Activated T-helper 2 cell treated with anti-CD3 and anti-CD28 coated beads, Interferon-gamma antibody, Interleukin-2, Interleukin-4, amounts not matched to agents 10 μg/mL and 5 μg/mL and 100 μg/mL, durations not matched to agents 14 hours and 24 hours and 36 hours (primary cell): ENCODE measurements at regions of chr2 and their contacts with region 1.

Region 1: GRCh38 chr2:112749755-112750559 is 14.5 kb downstream of the CKAP2L start:
- DNase-seq: peak; percentile 74
- H3K4me3 Mint-ChIP-seq: peak overlapping the region; percentile 13
- H3K27ac Mint-ChIP-seq: peak overlapping the region; percentile 75
- H3K4me1 Mint-ChIP-seq: peaks cover 35% of the 10 kb centered on the region
- H3K27me3 Mint-ChIP-seq: no peaks in the 10 kb centered on the region

Region 2: DNA sequence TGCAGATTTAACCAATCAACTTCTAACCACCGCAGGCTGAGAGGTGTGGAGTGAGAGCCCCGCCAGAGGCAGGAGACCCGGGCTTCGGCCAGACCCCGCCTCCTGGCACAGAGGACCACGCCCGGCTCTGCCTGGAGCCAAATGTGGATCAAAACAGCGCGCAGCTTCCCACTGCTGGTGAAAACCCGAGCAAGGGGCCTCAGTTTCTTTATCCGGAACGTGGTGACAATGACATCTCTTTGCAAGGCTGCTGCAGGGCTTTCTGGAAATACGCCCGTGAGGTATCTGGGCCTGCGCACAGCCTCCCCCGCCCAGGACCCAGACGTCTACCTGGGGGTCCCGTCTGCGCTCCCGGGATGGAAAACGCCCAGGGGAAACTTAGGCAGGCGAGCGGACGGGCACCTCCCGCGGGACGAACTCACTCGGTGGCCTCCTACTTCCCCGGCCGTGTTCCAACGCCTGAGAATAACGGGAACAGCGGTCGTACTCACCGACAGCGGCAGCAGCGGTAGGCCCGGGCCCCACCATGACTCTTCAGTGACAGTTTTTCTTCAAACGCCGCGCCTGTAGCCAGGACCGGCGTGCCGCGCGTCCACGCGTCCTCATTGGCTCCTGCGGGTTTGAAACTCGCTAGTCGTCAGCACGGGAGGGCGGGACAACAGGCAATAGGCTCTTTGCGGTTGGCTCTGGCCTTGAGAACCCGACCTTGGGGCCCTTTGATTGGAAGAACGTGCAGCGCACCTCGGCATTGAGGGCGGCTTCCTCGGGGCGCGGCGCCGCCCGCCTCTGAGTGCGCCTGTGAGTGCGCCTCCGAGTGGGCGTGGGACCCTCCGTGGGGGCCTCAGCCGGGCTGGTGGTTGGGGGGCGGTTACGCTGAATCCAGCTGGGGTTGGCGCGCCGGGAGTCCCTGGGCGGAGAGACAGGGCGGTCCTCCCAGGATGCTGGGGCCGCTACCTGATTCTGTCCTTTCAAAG is 14.4 kb after region 1 on chr2 and contains the start of gene CKAP2L:
- intact Hi-C with region 1: loop called (anchors 2 kb)
- DNase-seq: peak; percentile 97
- H3K4me3 Mint-ChIP-seq: peak within 1 kb of the TSS; percentile 85
- H3K27ac Mint-ChIP-seq: peak within 1 kb of the TSS; percentile 96
- H3K4me1 Mint-ChIP-seq: peaks cover 53% of the 10 kb centered on the region
- H3K27me3 Mint-ChIP-seq: no peaks in the 10 kb centered on the region
- total RNA-seq, gene CKAP2L: 24.4 and 27.2 TPM in 2 replicates

Region 3: GRCh38 chr2:112941753-112942658 is 192.0 kb after region 1 on chr2:
- intact Hi-C with region 1: loop called (anchors 1 kb)
- DNase-seq: peak; percentile 62
- H3K4me3 Mint-ChIP-seq: no peak overlapping the region
- H3K27ac Mint-ChIP-seq: no peak overlapping the region
- H3K4me1 Mint-ChIP-seq: peaks cover 3% of the 10 kb centered on the region
- H3K27me3 Mint-ChIP-seq: peaks cover 33% of the 10 kb centered on the region